ENCODE measurements at regions of chr2 and their contacts with region 1.

Region 1: GRCh38 chr2:99818842-99819241 is 323.5 kb downstream of the AFF3 start:
- DNase-seq: peak in 2 of 9 donors; percentile 6 to 16
- ATAC-seq: no peak
- H3K4me3 ChIP-seq: no peak overlapping the region
- H3K4me3 Mint-ChIP-seq: no peak overlapping the region
- H3K27ac ChIP-seq: no peak overlapping the region
- H3K27ac Mint-ChIP-seq: no peak overlapping the region
- H3K4me1 ChIP-seq: no peaks in the 10 kb centered on the region
- H3K4me1 Mint-ChIP-seq: no peaks in the 10 kb centered on the region
- H3K27me3 ChIP-seq: no peaks in the 10 kb centered on the region
- H3K27me3 Mint-ChIP-seq: peaks cover 0 to 4% (median 0%) of the 10 kb centered on the region in 5 donors

Region 2: GRCh38 chr2:99861376-99861760 is 42.5 kb after region 1 on chr2:
- CTCF ChIA-PET with region 1: no interaction called
- POLR2A ChIA-PET with region 1: no interaction called
- intact Hi-C with region 1: no loop called
- DNase-seq: peak in 3 of 9 donors; percentile 8 to 11 (median 9)
- ATAC-seq: peak; percentile 36
- H3K4me3 ChIP-seq: no peak overlapping the region
- H3K4me3 Mint-ChIP-seq: peak overlapping the region in 4 of 10 donors; percentile 11 to 40 (median 24)
- H3K27ac ChIP-seq: no peak overlapping the region
- H3K27ac Mint-ChIP-seq: peak overlapping the region in 1 of 9 donors; percentile 32
- H3K4me1 ChIP-seq: peaks cover 0 to 16% of the 10 kb centered on the region in 2 donors
- H3K4me1 Mint-ChIP-seq: peaks cover 14 to 36% (median 27%) of the 10 kb centered on the region in 7 donors
- H3K27me3 ChIP-seq: no peaks in the 10 kb centered on the region
- H3K27me3 Mint-ChIP-seq: peaks cover 0 to under 1% (median 0%) of the 10 kb centered on the region in 5 donors

Region 3: DNA sequence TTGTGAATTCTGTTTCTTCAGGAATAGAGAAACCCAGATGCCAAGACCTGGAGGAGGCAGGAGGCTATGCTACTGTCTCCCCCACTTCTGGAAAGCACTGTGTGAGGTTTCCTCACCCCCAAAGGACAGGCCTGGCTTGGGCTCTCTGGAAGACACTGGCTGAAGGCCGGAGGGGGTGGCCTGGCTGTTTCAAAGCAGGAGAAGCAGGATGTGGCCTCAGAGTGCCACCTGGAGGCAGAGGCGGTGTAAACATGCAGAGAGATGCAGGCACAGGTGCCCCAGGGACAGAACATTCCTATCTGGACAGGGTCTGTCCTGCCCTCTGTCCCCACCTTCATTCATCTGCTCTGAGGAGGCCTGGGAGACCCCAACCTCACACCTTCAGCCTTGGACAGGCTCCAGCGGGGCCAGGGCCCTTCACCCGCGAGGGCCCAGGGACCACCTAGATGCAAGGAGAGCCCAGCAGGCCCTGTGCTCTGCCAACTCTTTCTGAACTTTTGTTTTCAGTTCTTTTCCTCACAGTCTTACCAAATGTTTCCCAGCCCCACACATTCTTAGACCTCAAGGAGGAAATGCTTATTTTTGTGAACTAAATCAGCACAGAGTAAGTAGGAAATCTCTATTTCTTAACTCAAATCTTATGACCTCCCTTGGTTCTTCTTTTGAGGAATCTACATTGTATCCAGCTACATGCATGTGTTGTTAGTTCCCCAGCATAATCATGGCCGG is 424.2 kb after region 1 on chr2:
- CTCF ChIA-PET with region 1: interaction called, 3 read pairs
- POLR2A ChIA-PET with region 1: no interaction called
- intact Hi-C with region 1: loop called in 1 of 2 experiments (anchors 5 kb)
- DNase-seq: peak in 6 of 9 donors; percentile 17 to 48 (median 43)
- ATAC-seq: peak; percentile 56
- H3K4me3 ChIP-seq: no peak overlapping the region
- H3K4me3 Mint-ChIP-seq: no peak overlapping the region
- H3K27ac ChIP-seq: no peak overlapping the region
- H3K27ac Mint-ChIP-seq: no peak overlapping the region
- H3K4me1 ChIP-seq: no peaks in the 10 kb centered on the region
- H3K4me1 Mint-ChIP-seq: no peaks in the 10 kb centered on the region
- H3K27me3 ChIP-seq: no peaks in the 10 kb centered on the region
- H3K27me3 Mint-ChIP-seq: peaks cover 0 to 9% (median 4%) of the 10 kb centered on the region in 5 donors

Region 4: DNA sequence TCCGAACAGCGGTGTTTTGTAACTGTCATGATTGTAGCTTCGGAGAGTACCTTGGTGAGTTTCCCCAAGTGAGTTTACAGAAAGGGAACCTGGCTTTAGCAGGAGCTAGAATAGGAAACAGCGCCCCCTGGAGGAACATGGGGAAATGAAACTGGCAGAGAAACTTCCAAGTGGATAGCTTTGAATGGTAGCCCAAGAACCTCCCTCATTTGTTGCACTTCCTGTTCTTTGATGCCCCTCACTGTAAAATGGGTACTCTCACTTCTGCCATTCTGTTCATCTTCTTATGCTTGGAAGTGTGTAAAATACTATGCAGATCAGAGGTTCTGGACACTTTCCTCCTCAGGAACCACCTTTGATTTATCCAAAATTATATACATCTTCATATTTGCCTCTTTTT is 562.4 kb after region 1 on chr2:
- CTCF ChIA-PET with region 1: no interaction called
- POLR2A ChIA-PET with region 1: no interaction called
- intact Hi-C with region 1: loop called in 1 of 2 experiments (anchors 5 kb)
- DNase-seq: peak; percentile 20 to 75 (median 49)
- ATAC-seq: peak; percentile 80
- H3K4me3 ChIP-seq: no peak overlapping the region
- H3K4me3 Mint-ChIP-seq: no peak overlapping the region
- H3K27ac ChIP-seq: no peak overlapping the region
- H3K27ac Mint-ChIP-seq: no peak overlapping the region
- H3K4me1 ChIP-seq: no peaks in the 10 kb centered on the region
- H3K4me1 Mint-ChIP-seq: peaks cover 0 to 6% (median 0%) of the 10 kb centered on the region in 7 donors
- H3K27me3 ChIP-seq: no peaks in the 10 kb centered on the region
- H3K27me3 Mint-ChIP-seq: peaks cover 0 to 12% (median 0%) of the 10 kb centered on the region in 5 donors

Measured in naive thymus-derived CD4-positive, alpha-beta T cell (primary cell).